ENCODE measurements at regions of chr1 and their contacts with region 1.

Region 1: DNA sequence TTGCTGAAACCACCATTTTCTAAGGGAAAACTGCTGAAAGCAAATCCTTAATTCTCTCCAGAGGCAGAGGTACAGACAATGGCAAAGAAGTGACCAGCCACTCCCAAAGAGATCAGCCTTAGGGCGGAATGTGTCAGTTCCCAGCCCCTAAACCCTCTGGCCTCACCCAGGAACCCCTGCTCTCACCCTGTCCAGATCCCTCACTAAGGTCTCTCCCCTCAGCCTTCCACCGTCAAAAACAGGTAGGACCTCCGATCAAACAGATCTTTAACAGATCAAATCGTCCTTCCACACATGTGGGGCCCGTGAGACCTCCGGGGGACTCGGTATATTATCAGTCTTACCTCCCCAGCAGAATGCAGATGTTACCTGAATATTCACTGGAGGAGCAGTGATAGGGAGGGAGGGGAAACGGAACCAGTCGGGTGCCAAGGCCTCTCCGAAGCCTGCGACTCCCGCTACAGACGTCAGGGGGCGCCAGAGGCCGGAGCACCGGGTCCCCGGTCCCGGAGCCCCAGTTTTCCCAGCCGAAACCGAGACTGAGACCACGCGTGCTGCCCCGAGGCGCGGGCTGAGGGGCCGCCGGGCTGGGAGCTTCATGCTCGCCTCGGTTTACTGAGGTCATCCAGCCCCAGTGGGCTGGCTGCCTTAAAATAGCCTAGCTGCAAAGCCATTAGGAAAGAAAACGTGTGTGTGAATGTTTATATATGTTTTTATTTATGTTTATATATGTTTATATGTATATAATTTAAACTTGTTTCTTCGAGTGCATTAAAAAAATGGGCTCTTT is 23.6 kb downstream of the GPA33 start:
- DNase-seq: peak; percentile 91
- H3K4me3 ChIP-seq: peak overlapping the region; percentile 30 to 47; a peak in 3 of 4 replicates
- H3K27ac ChIP-seq: no peak overlapping the region
- H3K4me1 ChIP-seq: no peaks in the 10 kb centered on the region; a peak in 2 of 4 replicates
- H3K27me3 ChIP-seq: no peaks in the 10 kb centered on the region; the same call in 1 of the 2 replicates
- CTCF ChIP-seq: peak; percentile 94
- EP300 ChIP-seq: no peak
- RAD21 ChIP-seq: peak; percentile 96

Region 2: GRCh38 chr1:167126811-167127210 is 60.3 kb after region 1 on chr1:
- CTCF ChIA-PET with region 1: interaction called, 15 read pairs
- POLR2A ChIA-PET with region 1: no interaction called
- DNase-seq: no peak
- H3K4me3 ChIP-seq: no peak overlapping the region
- H3K27ac ChIP-seq: no peak overlapping the region
- H3K4me1 ChIP-seq: no peaks in the 10 kb centered on the region
- H3K27me3 ChIP-seq: peaks cover 9% of the 10 kb centered on the region; the same call in 1 of the 2 replicates
- CTCF ChIP-seq: no peak
- EP300 ChIP-seq: no peak
- RAD21 ChIP-seq: no peak

Region 3: DNA sequence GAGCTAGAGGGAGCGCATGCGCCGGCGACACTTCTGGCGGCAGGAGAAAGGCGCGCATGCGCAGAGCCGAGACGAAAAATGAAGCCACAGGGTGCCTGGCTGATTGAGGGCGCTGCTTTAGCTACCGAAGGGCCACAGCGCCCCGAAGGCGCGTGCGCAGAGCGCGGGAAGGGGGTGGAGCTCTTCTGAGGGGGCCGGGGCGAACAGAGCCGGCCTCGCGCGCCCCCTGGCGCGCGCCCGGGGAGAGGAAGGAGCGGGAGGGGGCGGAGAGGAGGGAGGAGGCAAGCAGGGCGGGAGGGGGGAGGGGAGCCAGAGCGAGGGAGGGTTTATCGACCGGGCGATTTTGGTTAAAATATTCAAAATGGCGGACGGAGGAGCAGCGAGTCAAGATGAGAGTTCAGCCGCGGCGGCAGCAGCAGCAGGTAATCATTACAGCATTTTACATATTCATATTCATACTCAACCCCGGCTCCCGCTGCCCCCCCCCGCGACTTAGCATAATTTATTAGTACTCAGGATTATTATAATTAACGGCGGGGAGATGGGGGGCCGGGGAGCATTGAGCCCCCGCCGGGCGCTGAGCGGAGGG is 154.1 kb after region 1 on chr1 and contains the start of gene POU2F1:
- CTCF ChIA-PET with region 1: interaction called, 36 read pairs
- POLR2A ChIA-PET with region 1: no interaction called
- DNase-seq: peak; percentile 96
- H3K4me3 ChIP-seq: peak within 1 kb of the TSS; percentile 85 to 100
- H3K27ac ChIP-seq: peak within 1 kb of the TSS; percentile 74 to 92
- H3K4me1 ChIP-seq: peaks cover 4 to 19% of the 10 kb centered on the region in 2 experiments; a peak in 3 of 4 replicates
- H3K27me3 ChIP-seq: no peaks in the 10 kb centered on the region
- CTCF ChIP-seq: peak; percentile 68
- EP300 ChIP-seq: no peak
- RAD21 ChIP-seq: peak; percentile 60
- polyA plus RNA-seq, gene POU2F1: 1.2 and 1.5 TPM in 2 replicates

Measured in SK-N-SH (cell line).